Breast epithelium (tissue), 4 donors: ENCODE measurements at regions of chr1 and their contacts with region 1.

Region 1: GRCh38 chr1:2283991-2284895 is 56.1 kb downstream of the SKI start:
- DNase-seq: no peak
- H3K4me3 ChIP-seq: no peak overlapping the region
- H3K27ac ChIP-seq: peak overlapping the region; percentile 25 to 69
- H3K4me1 ChIP-seq: peaks cover 0 to 4% of the 10 kb centered on the region in 2 donors
- H3K27me3 ChIP-seq: no peaks in the 10 kb centered on the region
- CTCF ChIP-seq: no peak
- POLR2A ChIP-seq: no peak

Region 2: GRCh38 chr1:2301607-2302291 is 17.5 kb after region 1 on chr1:
- intact Hi-C with region 1: loop called (anchors 1 kb)
- DNase-seq: no peak
- H3K4me3 ChIP-seq: peak overlapping the region in 1 of 3 donors; percentile 51
- H3K27ac ChIP-seq: peak overlapping the region; percentile 61 to 86
- H3K4me1 ChIP-seq: peaks cover 8 to 17% of the 10 kb centered on the region in 2 donors
- H3K27me3 ChIP-seq: no peaks in the 10 kb centered on the region
- CTCF ChIP-seq: no peak
- POLR2A ChIP-seq: no peak